H1 (cell line): ENCODE measurements at regions of chr3 and their contacts with region 1.

Region 1: DNA sequence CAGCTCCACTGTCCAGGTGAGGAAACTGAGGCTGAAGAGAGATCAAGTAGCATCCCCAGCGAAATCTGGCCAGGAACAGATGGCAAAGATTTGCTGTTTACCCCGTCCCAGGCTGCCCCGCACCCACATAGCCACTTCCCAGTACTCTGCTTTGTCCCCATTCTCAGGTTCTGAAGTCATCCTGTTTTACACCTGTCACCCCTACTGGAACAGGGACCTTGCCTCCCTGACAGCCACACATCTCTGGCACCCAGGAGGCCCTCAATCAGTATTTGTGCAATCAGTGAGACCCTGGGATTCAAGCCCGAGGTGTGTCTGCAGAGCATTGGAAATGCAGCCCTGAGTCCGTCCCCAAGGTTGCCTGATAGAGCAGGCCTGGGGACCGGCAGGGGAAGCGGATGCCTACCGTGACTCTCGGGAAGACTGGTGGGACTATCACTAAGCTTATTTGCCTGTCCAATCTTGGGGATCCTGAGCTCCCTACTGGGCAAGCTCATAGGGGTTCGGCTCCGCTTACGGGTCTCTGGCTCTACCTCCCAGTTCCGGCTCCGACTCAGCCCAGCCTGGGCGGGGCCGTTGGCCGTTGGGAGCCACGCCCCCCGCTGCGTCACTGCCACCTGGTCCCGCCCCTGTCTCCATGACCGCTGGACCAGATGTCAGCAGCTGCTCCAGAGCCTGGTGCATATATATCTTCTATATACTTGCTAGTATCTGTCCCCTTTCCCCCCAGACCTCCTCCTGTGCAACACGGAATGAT is 17.5 kb upstream of the FANCD2 start:
- DNase-seq: peak in 1 of 2 experiments; percentile 97
- H3K4me3 ChIP-seq: peak overlapping the region; percentile 30 to 62 (median 52)
- H3K27ac ChIP-seq: no peak overlapping the region
- H3K4me1 ChIP-seq: peaks cover 0 to 5% (median 3%) of the 10 kb centered on the region in 4 experiments; a peak in 4 of 7 replicates
- H3K27me3 ChIP-seq: no peaks in the 10 kb centered on the region
- CTCF ChIP-seq: no peak
- EP300 ChIP-seq: no peak
- POLR2A ChIP-seq: no peak
- RAD21 ChIP-seq: no peak

Region 2: DNA sequence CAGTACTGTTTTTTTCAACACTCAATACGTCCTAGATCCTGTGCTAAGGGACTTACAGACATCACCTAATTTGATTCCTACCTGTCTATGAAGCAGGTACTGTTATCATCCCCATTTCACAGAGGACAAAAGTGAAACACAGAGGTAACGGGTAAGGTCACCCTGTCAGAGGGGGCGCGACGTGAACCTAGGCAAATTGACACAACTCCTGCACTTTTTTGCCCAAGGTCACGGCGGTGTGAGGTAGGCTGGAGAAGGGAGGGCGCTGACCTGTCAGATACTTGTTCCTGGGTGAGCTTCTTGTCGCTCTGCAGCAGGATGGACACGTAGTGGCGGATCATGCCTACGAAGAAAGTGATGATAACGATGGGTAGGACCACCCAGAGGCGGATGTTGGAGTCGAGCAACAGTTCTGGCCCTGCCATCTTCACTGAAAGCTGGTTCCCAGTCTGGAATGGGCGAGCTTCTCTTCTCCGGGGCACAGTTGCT is 22.5 kb before region 1 on chr3:
- CTCF ChIA-PET with region 1: interaction called, 3 read pairs
- POLR2A ChIA-PET with region 1: interaction called, 35 read pairs
- DNase-seq: no peak
- H3K4me3 ChIP-seq: peak overlapping the region; percentile 60 to 95 (median 90)
- H3K27ac ChIP-seq: peak overlapping the region; percentile 82
- H3K4me1 ChIP-seq: peaks cover 0 to 10% (median 2%) of the 10 kb centered on the region in 4 experiments; a peak in 2 of 7 replicates
- H3K27me3 ChIP-seq: no peaks in the 10 kb centered on the region
- CTCF ChIP-seq: no peak
- EP300 ChIP-seq: no peak
- POLR2A ChIP-seq: no peak
- RAD21 ChIP-seq: no peak

Region 3: DNA sequence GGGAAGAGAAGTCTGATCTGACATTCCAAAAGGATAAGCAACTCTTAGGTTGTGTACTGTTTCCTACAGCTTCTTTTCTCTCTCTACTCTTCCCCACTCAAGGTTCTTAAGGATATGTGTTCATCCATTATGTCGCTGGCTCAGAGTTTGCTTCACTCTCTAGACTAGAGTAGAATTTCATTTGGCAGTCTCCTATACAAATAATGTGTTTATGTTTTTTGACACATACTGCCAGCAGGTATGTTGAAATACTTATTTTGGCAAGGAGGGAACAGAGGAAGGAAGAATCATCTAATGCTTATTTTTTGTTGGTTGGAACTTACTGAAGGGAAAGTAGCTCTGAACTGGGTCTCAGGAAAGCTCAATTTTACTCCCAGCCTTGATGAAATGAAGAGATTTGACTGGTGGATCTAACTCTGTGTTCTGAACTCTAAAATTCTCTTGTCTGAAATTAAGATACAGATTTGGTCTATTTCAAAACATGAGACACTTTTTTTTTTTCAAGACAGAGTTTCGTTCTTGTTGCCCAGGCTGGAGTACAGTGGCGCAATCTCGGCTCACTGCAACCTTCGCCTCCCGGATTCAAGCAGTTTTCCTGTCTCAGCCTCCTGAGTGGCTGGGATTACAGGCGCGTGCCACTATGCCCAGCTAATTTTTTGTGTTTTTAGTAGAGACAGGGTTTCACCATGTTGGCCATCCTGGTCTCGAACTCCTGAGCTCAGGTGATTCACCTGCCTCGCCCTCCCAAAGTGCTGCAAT is 14.5 kb before region 1 on chr3:
- CTCF ChIA-PET with region 1: interaction called, 4 read pairs
- POLR2A ChIA-PET with region 1: interaction called, 16 read pairs
- DNase-seq: no peak
- H3K4me3 ChIP-seq: no peak overlapping the region
- H3K27ac ChIP-seq: no peak overlapping the region
- H3K4me1 ChIP-seq: no peaks in the 10 kb centered on the region
- H3K27me3 ChIP-seq: no peaks in the 10 kb centered on the region
- CTCF ChIP-seq: no peak
- EP300 ChIP-seq: no peak
- POLR2A ChIP-seq: no peak
- RAD21 ChIP-seq: no peak

Region 4: GRCh38 chr3:10085736-10086135 is 77.0 kb after region 1 on chr3:
- CTCF ChIA-PET with region 1: no interaction called
- POLR2A ChIA-PET with region 1: no interaction called
- DNase-seq: no peak
- H3K4me3 ChIP-seq: no peak overlapping the region
- H3K27ac ChIP-seq: no peak overlapping the region
- H3K4me1 ChIP-seq: no peaks in the 10 kb centered on the region
- H3K27me3 ChIP-seq: no peaks in the 10 kb centered on the region
- CTCF ChIP-seq: no peak
- EP300 ChIP-seq: no peak
- POLR2A ChIP-seq: no peak
- RAD21 ChIP-seq: no peak